Caco-2 (cell line): ENCODE measurements at regions of chr3 and their contacts with region 1.

Region 1: GRCh38 chr3:61251174-61251972 is at the start of gene FHIT:
- DNase-seq: peak; percentile 95 to 96
- H3K4me3 ChIP-seq: peak within 1 kb of the TSS; percentile 58
- H3K4me3 Mint-ChIP-seq: peak within 1 kb of the TSS; percentile 80
- H3K27ac Mint-ChIP-seq: peak within 1 kb of the TSS; percentile 35
- H3K4me1 ChIP-seq: no peaks in the 10 kb centered on the region
- H3K4me1 Mint-ChIP-seq: no peaks in the 10 kb centered on the region
- H3K27me3 ChIP-seq: no peaks in the 10 kb centered on the region
- H3K27me3 Mint-ChIP-seq: no peaks in the 10 kb centered on the region
- CTCF ChIP-seq: no peak
- total RNA-seq, gene FHIT: 5.4 and 8.3 TPM in 2 replicates

Region 2: GRCh38 chr3:60226912-60227311 is 1024.5 kb before region 1 on chr3:
- CTCF ChIA-PET with region 1: no interaction called
- POLR2A ChIA-PET with region 1: no interaction called
- intact Hi-C with region 1: no loop called
- DNase-seq: no peak
- H3K4me3 ChIP-seq: no peak overlapping the region
- H3K4me3 Mint-ChIP-seq: no peak overlapping the region
- H3K27ac Mint-ChIP-seq: no peak overlapping the region
- H3K4me1 ChIP-seq: no peaks in the 10 kb centered on the region
- H3K4me1 Mint-ChIP-seq: peaks cover 5% of the 10 kb centered on the region
- H3K27me3 ChIP-seq: no peaks in the 10 kb centered on the region
- H3K27me3 Mint-ChIP-seq: no peaks in the 10 kb centered on the region
- CTCF ChIP-seq: no peak

Region 3: DNA sequence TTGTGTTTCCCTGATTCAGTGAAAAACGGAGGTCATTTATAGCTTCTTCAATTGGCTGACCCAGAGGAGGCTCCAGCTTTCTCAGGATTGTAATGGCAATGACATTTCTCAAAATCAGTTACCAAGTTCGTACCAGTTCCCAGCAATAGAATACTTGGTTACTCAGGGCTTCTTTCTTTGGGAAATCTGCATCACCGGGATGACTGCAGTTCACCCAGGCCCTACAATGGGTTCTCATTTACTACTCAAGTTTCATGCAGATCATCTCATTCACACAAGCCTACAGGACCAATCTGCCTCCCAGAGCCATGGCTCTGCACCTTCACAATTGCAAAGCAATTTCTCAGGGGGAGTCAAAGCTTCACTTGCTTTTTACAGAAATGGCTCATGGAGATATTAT is 109.7 kb before region 1 on chr3:
- CTCF ChIA-PET with region 1: interaction called, 3 read pairs
- POLR2A ChIA-PET with region 1: no interaction called
- intact Hi-C with region 1: loop called (anchors 1 kb)
- DNase-seq: no peak
- H3K4me3 ChIP-seq: no peak overlapping the region
- H3K4me3 Mint-ChIP-seq: no peak overlapping the region
- H3K27ac Mint-ChIP-seq: peak overlapping the region; percentile 16
- H3K4me1 ChIP-seq: peaks cover 10% of the 10 kb centered on the region
- H3K4me1 Mint-ChIP-seq: no peaks in the 10 kb centered on the region
- H3K27me3 ChIP-seq: no peaks in the 10 kb centered on the region
- H3K27me3 Mint-ChIP-seq: no peaks in the 10 kb centered on the region
- CTCF ChIP-seq: no peak

Region 4: GRCh38 chr3:61172684-61173083 is 78.7 kb before region 1 on chr3:
- CTCF ChIA-PET with region 1: no interaction called
- POLR2A ChIA-PET with region 1: no interaction called
- intact Hi-C with region 1: loop called (anchors 2 kb)
- DNase-seq: peak; percentile 37 to 40
- H3K4me3 ChIP-seq: no peak overlapping the region
- H3K4me3 Mint-ChIP-seq: no peak overlapping the region
- H3K27ac Mint-ChIP-seq: no peak overlapping the region
- H3K4me1 ChIP-seq: peaks cover 7% of the 10 kb centered on the region; the same call in 1 of the 2 replicates
- H3K4me1 Mint-ChIP-seq: peaks cover 11% of the 10 kb centered on the region
- H3K27me3 ChIP-seq: no peaks in the 10 kb centered on the region
- H3K27me3 Mint-ChIP-seq: no peaks in the 10 kb centered on the region
- CTCF ChIP-seq: peak in 1 of 2 experiments; percentile 68

Region 5: GRCh38 chr3:61194892-61195538 is 56.4 kb before region 1 on chr3:
- CTCF ChIA-PET with region 1: no interaction called
- POLR2A ChIA-PET with region 1: no interaction called
- intact Hi-C with region 1: loop called (anchors 1 kb)
- DNase-seq: peak in 1 of 2 experiments; percentile 12
- H3K4me3 ChIP-seq: no peak overlapping the region
- H3K4me3 Mint-ChIP-seq: no peak overlapping the region
- H3K27ac Mint-ChIP-seq: no peak overlapping the region
- H3K4me1 ChIP-seq: peaks cover 16% of the 10 kb centered on the region
- H3K4me1 Mint-ChIP-seq: peaks cover 19% of the 10 kb centered on the region
- H3K27me3 ChIP-seq: no peaks in the 10 kb centered on the region
- H3K27me3 Mint-ChIP-seq: no peaks in the 10 kb centered on the region
- CTCF ChIP-seq: no peak